ENCODE measurements at regions of chr14 and their contacts with region 1.

Region 1: GRCh38 chr14:23275412-23275811 is 10.5 kb downstream of the HOMEZ start:
- DNase-seq: no peak
- H3K4me3 ChIP-seq: no peak overlapping the region
- H3K27ac ChIP-seq: no peak overlapping the region
- H3K4me1 ChIP-seq: no peaks in the 10 kb centered on the region
- H3K27me3 ChIP-seq: no peaks in the 10 kb centered on the region
- CTCF ChIP-seq: no peak
- EP300 ChIP-seq: no peak
- RAD21 ChIP-seq: no peak

Region 2: GRCh38 chr14:23258256-23258655 is 17.2 kb before region 1 on chr14:
- CTCF ChIA-PET with region 1: interaction called, 22 read pairs
- POLR2A ChIA-PET with region 1: no interaction called
- DNase-seq: no peak
- H3K4me3 ChIP-seq: no peak overlapping the region
- H3K27ac ChIP-seq: no peak overlapping the region
- H3K4me1 ChIP-seq: no peaks in the 10 kb centered on the region
- H3K27me3 ChIP-seq: peaks cover 32% of the 10 kb centered on the region; the same call in 1 of the 2 replicates
- CTCF ChIP-seq: no peak
- EP300 ChIP-seq: no peak
- RAD21 ChIP-seq: no peak

Region 3: DNA sequence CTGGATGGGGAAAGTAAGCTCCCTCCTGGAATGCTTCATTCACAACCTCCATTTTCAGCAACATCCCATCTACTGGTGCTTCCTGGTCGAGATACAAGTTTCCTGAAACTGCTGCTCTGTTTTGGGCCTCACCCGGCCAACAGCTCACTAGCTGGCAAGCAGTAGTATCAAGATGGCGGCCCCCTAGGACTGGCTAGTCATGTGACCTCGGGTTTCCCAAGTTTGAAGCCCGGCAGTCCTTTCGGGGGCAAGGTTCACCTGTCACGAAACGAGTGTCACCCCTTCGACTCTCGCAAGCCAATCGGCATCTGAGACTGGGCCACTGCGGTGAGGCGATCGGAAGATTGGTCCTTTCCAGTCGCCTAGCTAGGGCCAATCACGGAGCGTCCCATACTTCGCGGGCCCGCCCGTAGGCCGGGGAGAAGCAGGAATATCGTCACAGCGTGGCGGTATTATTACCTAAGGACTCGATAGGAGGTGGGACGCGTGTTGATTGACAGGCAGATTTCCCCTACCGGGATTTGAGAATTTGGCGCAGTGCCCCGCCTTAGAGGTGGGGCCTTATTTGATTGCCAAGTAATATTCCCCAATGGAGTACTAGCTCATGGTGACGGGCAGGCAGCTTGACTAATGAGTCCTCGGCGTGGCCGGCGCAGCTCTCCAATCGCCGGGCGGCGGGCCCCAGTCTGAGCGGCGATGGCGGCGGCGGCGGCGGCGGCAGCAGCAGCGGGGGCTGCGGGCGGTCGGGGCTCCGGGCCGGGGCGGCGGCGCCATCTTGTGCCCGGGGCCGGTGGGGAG is 45.6 kb after region 1 on chr14 and contains the start of gene PABPN1:
- CTCF ChIA-PET with region 1: no interaction called
- POLR2A ChIA-PET with region 1: no interaction called
- DNase-seq: peak; percentile 94
- H3K4me3 ChIP-seq: peak within 1 kb of the TSS; percentile 84 to 92
- H3K27ac ChIP-seq: peak within 1 kb of the TSS; percentile 88 to 93
- H3K4me1 ChIP-seq: peaks cover 13 to 19% of the 10 kb centered on the region in 2 experiments; a peak in 3 of 4 replicates
- H3K27me3 ChIP-seq: no peaks in the 10 kb centered on the region
- CTCF ChIP-seq: no peak
- EP300 ChIP-seq: peak in 1 of 2 experiments; percentile 27; a peak in 1 of 4 replicates
- RAD21 ChIP-seq: no peak
- polyA plus RNA-seq, gene PABPN1: 266 and 444 TPM in 2 replicates

Measured in SK-N-SH (cell line).